ENCODE measurements at regions of chr5 and their contacts with region 1.

Region 1: DNA sequence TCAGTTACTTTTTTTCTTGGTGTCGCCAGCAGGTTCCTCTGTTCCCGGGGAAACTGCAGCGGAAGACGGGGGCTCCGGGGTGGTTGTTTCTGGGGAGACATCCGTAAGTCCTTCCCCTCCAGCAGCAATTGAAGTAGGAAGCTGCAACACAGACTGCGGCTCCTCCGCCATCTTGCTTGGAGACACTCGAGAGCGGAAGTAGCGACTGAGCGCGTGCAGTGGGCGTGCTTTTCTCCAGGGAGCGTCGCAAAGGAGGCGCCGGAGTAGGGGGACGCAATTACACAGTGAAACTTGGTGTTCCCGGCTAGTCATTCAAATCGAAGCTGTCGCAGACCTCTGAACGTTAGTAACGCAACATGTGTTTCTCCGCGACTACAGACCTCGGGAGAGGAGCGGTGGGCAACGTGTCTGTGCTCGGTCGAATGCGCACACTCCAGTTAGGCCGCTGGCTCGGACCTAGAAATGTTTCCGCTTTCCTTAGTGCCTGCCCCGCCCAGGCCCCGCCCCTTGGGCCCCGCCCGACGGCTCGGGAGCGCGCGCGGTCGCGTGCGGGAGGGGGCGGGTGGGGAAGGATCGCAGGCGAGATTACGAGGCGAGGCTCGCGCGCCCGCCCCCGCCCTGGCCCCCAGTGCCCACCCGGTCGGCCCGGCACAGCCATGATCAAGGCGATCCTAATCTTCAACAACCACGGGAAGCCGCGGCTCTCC is at the starts of genes AP3S1 and ATG12:
- DNase-seq: peak; percentile 94
- ATAC-seq: peak; percentile 90
- H3K4me3 Mint-ChIP-seq: peak within 1 kb of the TSS; percentile 93
- H3K27ac Mint-ChIP-seq: peak within 1 kb of the TSS; percentile 99
- H3K4me1 Mint-ChIP-seq: peaks cover 51% of the 10 kb centered on the region
- H3K27me3 Mint-ChIP-seq: no peaks in the 10 kb centered on the region
- total RNA-seq, gene AP3S1: 84.5 to 91.6 TPM
- total RNA-seq, gene ATG12: 44.8 to 45.0 TPM

Region 2: GRCh38 chr5:115169487-115170133 is 671.9 kb before region 1 on chr5 and contains the start of gene TRIM36:
- CTCF ChIA-PET with region 1: no interaction called
- POLR2A ChIA-PET with region 1: no interaction called
- intact Hi-C with region 1: loop called in 1 of 2 experiments (anchors 1 kb)
- DNase-seq: peak; percentile 96
- ATAC-seq: peak; percentile 98
- H3K4me3 Mint-ChIP-seq: peak within 1 kb of the TSS; percentile 75
- H3K27ac Mint-ChIP-seq: no peak within 1 kb of the TSS
- H3K4me1 Mint-ChIP-seq: peaks cover 6% of the 10 kb centered on the region
- H3K27me3 Mint-ChIP-seq: peaks cover 56% of the 10 kb centered on the region
- total RNA-seq, gene TRIM36: 0.11 TPM in 1 of 2 experiments, not detected in the other

Region 3: GRCh38 chr5:115296124-115297022 is 545.2 kb before region 1 on chr5 and contains the start of gene CCDC112:
- CTCF ChIA-PET with region 1: interaction called, 4 read pairs
- POLR2A ChIA-PET with region 1: no interaction called
- intact Hi-C with region 1: loop called (anchors 2 kb)
- DNase-seq: peak; percentile 94
- ATAC-seq: peak; percentile 93
- H3K4me3 Mint-ChIP-seq: peak within 1 kb of the TSS; percentile 77
- H3K27ac Mint-ChIP-seq: peak within 1 kb of the TSS; percentile 44
- H3K4me1 Mint-ChIP-seq: peaks cover 7% of the 10 kb centered on the region
- H3K27me3 Mint-ChIP-seq: peaks cover 3% of the 10 kb centered on the region
- total RNA-seq, gene CCDC112: 2.2 to 4.1 TPM

Region 4: DNA sequence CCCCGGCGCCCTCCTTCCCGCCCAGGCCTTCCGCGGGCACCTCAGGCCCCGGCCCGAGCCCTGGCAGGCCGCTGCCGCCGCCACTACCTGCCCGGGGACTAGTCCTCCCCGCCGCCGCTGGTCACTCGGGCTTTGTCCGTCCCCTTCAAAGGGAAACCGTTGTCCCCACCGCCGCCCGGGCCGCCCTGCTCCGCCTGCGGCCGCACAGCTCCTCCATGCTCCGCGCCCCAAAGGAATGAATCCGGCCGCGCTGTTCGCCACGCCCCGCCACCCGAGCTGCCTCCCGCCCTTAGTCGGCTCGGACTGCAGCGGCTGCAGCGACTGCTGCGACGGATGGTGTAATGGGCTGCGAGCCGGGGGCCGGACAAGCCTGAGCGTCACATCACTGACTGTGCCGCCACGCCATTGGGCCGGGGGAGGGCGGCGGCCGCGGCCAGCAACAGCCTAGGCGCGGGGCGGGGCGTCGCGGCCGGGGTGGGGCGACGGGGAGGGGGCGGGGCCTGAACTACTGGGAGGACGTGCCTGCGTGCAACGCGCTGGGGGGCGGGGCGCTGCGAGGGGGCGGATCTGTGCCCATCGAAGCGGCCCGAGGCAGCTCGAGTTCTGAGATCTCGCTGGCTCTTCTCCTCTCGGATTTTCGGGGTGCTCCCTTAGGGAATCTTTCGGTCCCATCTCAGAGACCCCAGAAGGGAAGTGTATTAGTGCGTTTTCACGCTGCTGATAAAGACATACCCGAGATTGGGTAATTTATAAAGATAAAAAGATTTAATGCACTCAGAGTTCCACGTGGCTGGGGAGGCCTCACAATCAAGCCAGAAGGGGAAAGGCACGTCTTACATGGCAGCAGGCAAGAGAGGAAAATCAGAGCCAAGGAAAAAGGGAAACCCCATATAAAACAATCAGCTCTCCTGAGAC is 296.8 kb before region 1 on chr5 and contains the start of gene FEM1C:
- CTCF ChIA-PET with region 1: interaction called, 3 read pairs
- POLR2A ChIA-PET with region 1: no interaction called
- intact Hi-C with region 1: loop called (anchors 1 to 2 kb)
- DNase-seq: peak; percentile 100
- ATAC-seq: peak; percentile 93
- H3K4me3 Mint-ChIP-seq: peak within 1 kb of the TSS; percentile 96
- H3K27ac Mint-ChIP-seq: peak within 1 kb of the TSS; percentile 97
- H3K4me1 Mint-ChIP-seq: peaks cover 41% of the 10 kb centered on the region
- H3K27me3 Mint-ChIP-seq: no peaks in the 10 kb centered on the region
- total RNA-seq, gene FEM1C: 15.8 to 15.9 TPM

Region 5: GRCh38 chr5:115625579-115626444 is 215.7 kb before region 1 on chr5 and contains the start of gene TMED7:
- CTCF ChIA-PET with region 1: interaction called, 7 read pairs
- POLR2A ChIA-PET with region 1: no interaction called
- intact Hi-C with region 1: loop called (anchors 1 kb)
- DNase-seq: peak; percentile 100
- ATAC-seq: peak; percentile 92
- H3K4me3 Mint-ChIP-seq: no peak within 1 kb of the TSS
- H3K27ac Mint-ChIP-seq: peak within 1 kb of the TSS; percentile 94
- H3K4me1 Mint-ChIP-seq: peaks cover 25% of the 10 kb centered on the region
- H3K27me3 Mint-ChIP-seq: no peaks in the 10 kb centered on the region
- total RNA-seq, gene TMED7: 31.4 to 36.8 TPM

Region 6: GRCh38 chr5:115831163-115831768 is 10.3 kb before region 1 on chr5:
- CTCF ChIA-PET with region 1: interaction called, 6 read pairs
- POLR2A ChIA-PET with region 1: interaction called, 3 read pairs
- intact Hi-C with region 1: loop called in 1 of 2 experiments (anchors 1 kb)
- DNase-seq: peak; percentile 30
- ATAC-seq: peak; percentile 60
- H3K4me3 Mint-ChIP-seq: no peak overlapping the region
- H3K27ac Mint-ChIP-seq: no peak overlapping the region
- H3K4me1 Mint-ChIP-seq: peaks cover 4% of the 10 kb centered on the region
- H3K27me3 Mint-ChIP-seq: no peaks in the 10 kb centered on the region

Region 7: GRCh38 chr5:116084871-116085715 is 243.6 kb after region 1 on chr5 and contains the start of gene COMMD10:
- CTCF ChIA-PET with region 1: no interaction called
- POLR2A ChIA-PET with region 1: no interaction called
- intact Hi-C with region 1: loop called (anchors 1 kb)
- DNase-seq: peak; percentile 86
- ATAC-seq: peak; percentile 87
- H3K4me3 Mint-ChIP-seq: peak within 1 kb of the TSS; percentile 88
- H3K27ac Mint-ChIP-seq: peak within 1 kb of the TSS; percentile 94
- H3K4me1 Mint-ChIP-seq: peaks cover 50% of the 10 kb centered on the region
- H3K27me3 Mint-ChIP-seq: no peaks in the 10 kb centered on the region
- total RNA-seq, gene COMMD10: 19.7 to 23.0 TPM